ENCODE measurements at regions of chr15 and their contacts with region 1.

Region 1: GRCh38 chr15:81274931-81275707 is 48.8 kb downstream of the STARD5 start:
- DNase-seq: peak; percentile 82
- ATAC-seq: peak; percentile 99
- H3K4me3 ChIP-seq: no peak overlapping the region
- H3K27ac ChIP-seq: no peak overlapping the region
- H3K4me1 ChIP-seq: 0 out of 2 replicates have a peak, but pooled peaks cover 3% of the 10 kb centered on the region
- H3K27me3 ChIP-seq: no peaks in the 10 kb centered on the region
- CTCF ChIP-seq: peak; percentile 89 to 95 (median 90)
- EP300 ChIP-seq: no peak
- POLR2A ChIP-seq: no peak
- RAD21 ChIP-seq: peak; percentile 100

Region 2: GRCh38 chr15:80010131-80010673 is 1264.9 kb before region 1 on chr15:
- CTCF ChIA-PET with region 1: no interaction called
- POLR2A ChIA-PET with region 1: no interaction called
- RAD21 ChIA-PET with region 1: no interaction called
- SMC1A ChIA-PET with region 1: no interaction called
- in situ Hi-C with region 1: loop called (anchors 25 kb)
- intact Hi-C with region 1: no loop called
- DNase-seq: no peak
- ATAC-seq: peak; percentile 61
- H3K4me3 ChIP-seq: peak overlapping the region; percentile 32; the same call in 1 of the 2 replicates
- H3K27ac ChIP-seq: peak overlapping the region; percentile 93
- H3K4me1 ChIP-seq: peaks cover 43% of the 10 kb centered on the region
- H3K27me3 ChIP-seq: no peaks in the 10 kb centered on the region
- CTCF ChIP-seq: no peak
- EP300 ChIP-seq: no peak
- POLR2A ChIP-seq: no peak
- RAD21 ChIP-seq: no peak

Region 3: DNA sequence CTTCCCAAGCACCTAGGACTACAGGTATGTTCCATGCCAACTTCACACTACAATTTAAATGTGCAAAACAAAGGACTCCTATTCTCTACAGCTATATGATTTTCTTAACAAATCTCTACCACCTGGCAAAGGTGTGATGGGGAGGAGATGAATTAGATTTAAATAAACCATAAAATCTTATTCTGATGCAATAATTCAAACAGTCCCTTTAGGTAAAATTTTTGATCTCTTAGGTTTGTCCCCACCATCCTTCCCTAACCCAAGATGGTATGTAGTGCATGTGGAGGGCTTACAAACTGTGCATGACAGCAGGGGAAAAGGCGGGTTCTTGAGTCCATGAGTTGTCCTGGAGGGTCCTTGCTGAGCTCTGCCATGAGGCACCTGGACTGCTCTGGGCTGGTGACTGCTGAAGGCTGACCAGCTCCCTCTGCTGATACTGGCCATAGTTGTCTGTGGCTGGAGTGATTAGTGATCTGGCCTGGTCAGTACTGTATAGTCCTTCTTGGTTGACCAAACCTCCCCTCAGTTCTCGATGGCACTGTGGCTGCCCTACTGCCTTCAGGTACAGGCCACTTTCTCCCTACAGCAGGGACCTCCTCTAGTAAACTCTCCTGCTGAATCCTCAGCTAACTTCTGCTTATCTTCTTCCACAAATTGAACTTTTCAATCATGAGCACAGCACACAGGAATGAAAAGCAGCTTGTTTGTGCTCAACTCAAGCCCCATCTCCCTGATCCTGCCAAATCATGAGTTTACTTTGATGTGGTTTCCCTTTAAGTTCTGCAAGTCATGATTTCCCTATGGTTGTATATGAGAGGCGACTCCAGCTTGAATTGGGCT is 110.9 kb before region 1 on chr15:
- CTCF ChIA-PET with region 1: no interaction called
- POLR2A ChIA-PET with region 1: no interaction called
- RAD21 ChIA-PET with region 1: no interaction called
- SMC1A ChIA-PET with region 1: no interaction called
- in situ Hi-C with region 1: no loop called
- intact Hi-C with region 1: no loop called
- DNase-seq: no peak
- ATAC-seq: peak; percentile 44; the same call in 2 of the 3 replicates
- H3K4me3 ChIP-seq: no peak overlapping the region
- H3K27ac ChIP-seq: no peak overlapping the region
- H3K4me1 ChIP-seq: peaks cover 3% of the 10 kb centered on the region
- H3K27me3 ChIP-seq: no peaks in the 10 kb centered on the region; a peak in 1 of 4 replicates
- CTCF ChIP-seq: no peak
- EP300 ChIP-seq: no peak
- POLR2A ChIP-seq: no peak
- RAD21 ChIP-seq: no peak

Region 4: GRCh38 chr15:81301815-81302399 is 26.8 kb after region 1 on chr15:
- CTCF ChIA-PET with region 1: interaction called, 66 read pairs
- POLR2A ChIA-PET with region 1: interaction called, 4 read pairs
- RAD21 ChIA-PET with region 1: interaction called, 73 read pairs
- SMC1A ChIA-PET with region 1: interaction called, 109 read pairs
- in situ Hi-C with region 1: no loop called
- intact Hi-C with region 1: no loop called
- DNase-seq: peak; percentile 80
- ATAC-seq: peak; percentile 78
- H3K4me3 ChIP-seq: peak overlapping the region; percentile 62
- H3K27ac ChIP-seq: peak overlapping the region; percentile 99
- H3K4me1 ChIP-seq: peaks cover 55% of the 10 kb centered on the region
- H3K27me3 ChIP-seq: no peaks in the 10 kb centered on the region
- CTCF ChIP-seq: no peak
- EP300 ChIP-seq: peak; percentile 93 to 96
- POLR2A ChIP-seq: no peak
- RAD21 ChIP-seq: peak; percentile 28; the same call in 1 of the 2 replicates

Region 5: GRCh38 chr15:81330366-81331090 is 55.4 kb after region 1 on chr15:
- CTCF ChIA-PET with region 1: interaction called, 242 read pairs
- POLR2A ChIA-PET with region 1: no interaction called
- RAD21 ChIA-PET with region 1: interaction called, 137 read pairs
- SMC1A ChIA-PET with region 1: interaction called, 122 read pairs
- in situ Hi-C with region 1: no loop called
- intact Hi-C with region 1: no loop called
- DNase-seq: no peak
- ATAC-seq: no peak
- H3K4me3 ChIP-seq: no peak overlapping the region
- H3K27ac ChIP-seq: no peak overlapping the region
- H3K4me1 ChIP-seq: no peaks in the 10 kb centered on the region
- H3K27me3 ChIP-seq: no peaks in the 10 kb centered on the region
- CTCF ChIP-seq: no peak
- EP300 ChIP-seq: no peak
- POLR2A ChIP-seq: no peak
- RAD21 ChIP-seq: no peak

Region 6: GRCh38 chr15:81394603-81395002 is 119.5 kb after region 1 on chr15:
- CTCF ChIA-PET with region 1: interaction called, 70 read pairs
- POLR2A ChIA-PET with region 1: no interaction called
- RAD21 ChIA-PET with region 1: interaction called, 32 read pairs
- SMC1A ChIA-PET with region 1: interaction called, 63 read pairs
- in situ Hi-C with region 1: no loop called
- intact Hi-C with region 1: no loop called
- DNase-seq: no peak
- ATAC-seq: no peak
- H3K4me3 ChIP-seq: no peak overlapping the region
- H3K27ac ChIP-seq: no peak overlapping the region
- H3K4me1 ChIP-seq: no peaks in the 10 kb centered on the region
- H3K27me3 ChIP-seq: no peaks in the 10 kb centered on the region
- CTCF ChIP-seq: no peak
- EP300 ChIP-seq: no peak
- POLR2A ChIP-seq: no peak
- RAD21 ChIP-seq: no peak

Region 7: DNA sequence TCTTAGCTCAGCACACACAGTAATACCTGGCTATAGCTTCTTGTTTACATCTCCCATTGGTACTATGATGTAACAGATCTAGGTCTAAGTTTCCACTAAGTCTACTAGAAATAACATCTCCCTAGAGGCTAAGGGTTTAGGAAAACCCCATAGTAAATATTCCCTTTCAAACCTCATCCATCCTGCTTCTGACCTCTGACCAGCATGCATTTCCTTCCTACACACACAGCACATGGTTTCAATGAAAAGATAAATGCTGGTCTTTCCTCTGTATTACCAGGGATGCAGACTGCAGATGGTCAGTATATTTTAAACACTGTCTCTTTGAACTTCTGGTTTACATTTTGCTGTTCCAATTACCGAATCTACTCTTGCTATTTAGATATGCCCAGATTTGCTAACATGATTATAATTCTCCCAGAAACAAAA is 890.8 kb after region 1 on chr15:
- CTCF ChIA-PET with region 1: no interaction called
- POLR2A ChIA-PET with region 1: interaction called, 12 read pairs
- RAD21 ChIA-PET with region 1: no interaction called
- SMC1A ChIA-PET with region 1: no interaction called
- in situ Hi-C with region 1: no loop called
- intact Hi-C with region 1: no loop called
- DNase-seq: peak; percentile 12
- ATAC-seq: peak; percentile 83
- H3K4me3 ChIP-seq: no peak overlapping the region
- H3K27ac ChIP-seq: no peak overlapping the region
- H3K4me1 ChIP-seq: no peaks in the 10 kb centered on the region
- H3K27me3 ChIP-seq: no peaks in the 10 kb centered on the region
- CTCF ChIP-seq: no peak
- EP300 ChIP-seq: 0 out of 4 replicates have a peak, but pooled peaks of 1 of the 2 experiments have one; percentile 27
- POLR2A ChIP-seq: no peak
- RAD21 ChIP-seq: no peak